ENCODE measurements at regions of chr11 and their contacts with region 1.

Region 1: GRCh38 chr11:93652161-93652597 is 9.3 kb upstream of the CEP295 start:
- DNase-seq: peak; percentile 44
- ATAC-seq: peak; percentile 56; the same call in 1 of the 2 replicates
- H3K4me3 ChIP-seq: no peak overlapping the region
- H3K27ac ChIP-seq: no peak overlapping the region
- H3K4me1 ChIP-seq: no peaks in the 10 kb centered on the region
- H3K27me3 ChIP-seq: peaks cover 26% of the 10 kb centered on the region
- CTCF ChIP-seq: peak; percentile 76
- POLR2A ChIP-seq: no peak
- RAD21 ChIP-seq: peak; percentile 56

Region 2: DNA sequence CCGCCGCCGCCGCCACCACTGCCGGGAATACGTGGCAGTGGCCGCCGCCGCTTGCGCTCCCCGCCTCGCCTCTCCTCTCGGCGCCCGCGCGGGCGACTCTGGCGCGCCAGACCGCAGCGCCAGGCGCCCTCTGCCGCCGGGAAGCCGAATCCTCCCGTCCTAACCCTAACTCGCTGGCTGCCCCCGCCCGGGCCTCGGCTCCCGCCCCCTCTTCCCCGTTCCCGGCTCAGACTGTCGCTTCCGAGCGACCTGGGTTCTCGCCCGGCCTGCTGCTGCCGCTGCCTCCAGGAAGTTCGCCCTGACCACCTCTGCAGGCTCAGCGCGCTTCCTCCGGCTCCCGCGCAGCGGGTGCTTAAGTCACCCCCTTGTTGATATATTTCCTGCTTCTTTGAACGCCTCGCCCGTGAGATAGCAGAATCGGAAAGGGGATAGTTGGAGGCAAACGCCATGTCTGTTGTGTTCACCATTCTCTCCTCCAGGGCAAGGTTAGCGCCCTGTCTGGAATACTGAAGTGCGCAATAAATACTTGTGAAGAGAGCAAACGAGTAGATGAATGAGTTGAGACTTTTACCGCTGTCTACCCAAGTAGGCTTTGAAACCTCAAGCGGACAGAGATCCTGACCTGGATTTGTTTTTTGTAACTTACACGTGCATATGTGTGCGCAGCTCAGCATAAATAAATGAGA is 108.7 kb before region 1 on chr11 and contains the start of gene SMCO4:
- CTCF ChIA-PET with region 1: no interaction called
- POLR2A ChIA-PET with region 1: no interaction called
- dilution Hi-C with region 1: no loop called
- in situ Hi-C with region 1: no loop called
- intact Hi-C with region 1: loop called (anchors 5 kb)
- DNase-seq: peak; percentile 66
- ATAC-seq: peak; percentile 95
- H3K4me3 ChIP-seq: peak within 1 kb of the TSS; percentile 57
- H3K27ac ChIP-seq: no peak within 1 kb of the TSS; the same call in 1 of the 2 replicates
- H3K4me1 ChIP-seq: peaks cover 2% of the 10 kb centered on the region; the same call in 1 of the 2 replicates
- H3K27me3 ChIP-seq: peaks cover 17% of the 10 kb centered on the region
- CTCF ChIP-seq: peak; percentile 85
- POLR2A ChIP-seq: peak; percentile 45; the same call in 1 of the 2 replicates
- RAD21 ChIP-seq: peak; percentile 81
- total RNA-seq, gene SMCO4: 2.2 and 4.2 TPM in 2 replicates

Measured in IMR-90 (cell line).